ENCODE measurements at regions of chr10 and their contacts with region 1.

Region 1: GRCh38 chr10:114173921-114174694 is at the start of gene CCDC186:
- DNase-seq: peak; percentile 99
- ATAC-seq: peak; percentile 100
- H3K4me3 Mint-ChIP-seq: peak within 1 kb of the TSS; percentile 100
- H3K27ac Mint-ChIP-seq: peak within 1 kb of the TSS; percentile 99
- H3K4me1 Mint-ChIP-seq: peaks cover 32% of the 10 kb centered on the region
- H3K27me3 Mint-ChIP-seq: no peaks in the 10 kb centered on the region
- total RNA-seq, gene CCDC186: 9.1 to 13.9 TPM

Region 2: DNA sequence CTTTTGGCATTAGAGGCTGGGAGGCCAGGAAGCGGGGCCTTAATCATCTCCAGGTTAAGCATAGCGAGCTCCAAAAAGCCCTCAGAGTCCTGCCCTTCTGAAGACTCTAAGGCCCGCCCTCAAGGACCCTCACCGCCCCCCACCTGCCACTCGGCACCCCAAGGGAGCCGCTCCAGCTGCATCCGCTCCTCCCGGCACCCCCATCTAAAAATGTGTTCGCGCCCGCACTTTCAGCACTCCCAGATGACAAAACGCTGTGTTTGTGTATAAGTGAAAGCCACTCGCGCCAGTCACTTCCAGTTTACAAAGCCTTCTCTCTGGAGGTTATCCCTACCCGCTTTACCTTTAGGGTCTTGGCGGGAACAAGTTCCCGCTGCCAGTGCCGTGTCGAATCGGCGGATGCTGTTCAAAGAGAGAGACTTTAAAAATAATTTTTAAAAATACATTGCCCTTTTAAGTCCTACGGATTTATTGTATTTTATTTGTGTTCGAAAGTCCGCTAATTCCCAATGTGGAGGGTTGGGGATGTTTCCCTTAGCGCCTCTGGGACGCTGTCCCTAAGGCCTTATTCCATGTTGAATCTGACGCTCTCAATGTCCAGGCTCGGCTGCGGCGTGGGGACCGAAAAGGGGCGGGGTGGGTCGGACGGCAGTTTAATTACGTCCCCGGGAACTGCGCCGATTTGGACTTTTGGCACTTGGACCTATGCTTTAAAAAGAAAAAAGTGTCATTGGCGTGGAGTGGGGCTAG is 319.9 kb before region 1 on chr10 and contains the starts of genes DCLRE1A and NHLRC2:
- CTCF ChIA-PET with region 1: no interaction called
- POLR2A ChIA-PET with region 1: no interaction called
- intact Hi-C with region 1: loop called (anchors 2 to 5 kb)
- DNase-seq: peak; percentile 77
- ATAC-seq: peak; percentile 51
- H3K4me3 Mint-ChIP-seq: peak within 1 kb of the TSS; percentile 80
- H3K27ac Mint-ChIP-seq: peak within 1 kb of the TSS; percentile 97
- H3K4me1 Mint-ChIP-seq: peaks cover 39% of the 10 kb centered on the region
- H3K27me3 Mint-ChIP-seq: no peaks in the 10 kb centered on the region
- total RNA-seq, gene DCLRE1A: 12.5 to 14.4 TPM
- total RNA-seq, gene NHLRC2: 20.1 to 22.3 TPM

Region 3: GRCh38 chr10:114151892-114152291 is 22.2 kb before region 1 on chr10:
- CTCF ChIA-PET with region 1: no interaction called
- POLR2A ChIA-PET with region 1: no interaction called
- intact Hi-C with region 1: no loop called
- DNase-seq: no peak
- ATAC-seq: no peak
- H3K4me3 Mint-ChIP-seq: no peak overlapping the region
- H3K27ac Mint-ChIP-seq: no peak overlapping the region
- H3K4me1 Mint-ChIP-seq: no peaks in the 10 kb centered on the region
- H3K27me3 Mint-ChIP-seq: no peaks in the 10 kb centered on the region

Region 4: DNA sequence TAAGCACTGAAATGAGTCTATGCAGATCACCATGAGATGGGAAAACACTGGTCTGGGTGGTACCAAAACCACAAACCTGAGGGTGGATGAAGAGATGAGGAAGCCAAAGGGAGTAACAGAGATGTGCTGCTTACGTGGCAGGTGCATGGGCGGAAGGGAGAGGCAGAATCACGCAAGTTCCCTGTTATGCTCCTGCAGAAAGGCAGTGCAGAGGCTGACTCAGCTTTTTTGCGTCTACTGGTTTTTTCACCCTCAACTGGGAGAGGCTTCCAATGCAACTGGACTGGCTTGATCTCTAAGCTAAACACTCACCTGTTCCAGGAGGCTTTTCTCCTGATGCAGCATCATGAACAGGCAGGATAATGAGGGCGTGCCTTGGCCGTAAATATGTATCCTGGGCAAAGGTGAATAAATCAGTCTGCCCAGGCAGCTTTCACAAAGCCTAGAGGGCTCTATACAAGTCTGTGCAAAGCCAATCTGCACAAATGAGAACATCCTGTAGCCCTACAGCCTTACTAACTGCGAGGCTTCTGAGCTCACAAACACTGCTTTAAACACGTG is 325.6 kb after region 1 on chr10:
- CTCF ChIA-PET with region 1: no interaction called
- POLR2A ChIA-PET with region 1: no interaction called
- intact Hi-C with region 1: loop called in 1 of 2 experiments (anchors 5 kb)
- DNase-seq: peak; percentile 89
- ATAC-seq: peak; percentile 54
- H3K4me3 Mint-ChIP-seq: peak overlapping the region; percentile 61
- H3K27ac Mint-ChIP-seq: peak overlapping the region; percentile 99
- H3K4me1 Mint-ChIP-seq: peaks cover 92% of the 10 kb centered on the region
- H3K27me3 Mint-ChIP-seq: no peaks in the 10 kb centered on the region

Region 5: DNA sequence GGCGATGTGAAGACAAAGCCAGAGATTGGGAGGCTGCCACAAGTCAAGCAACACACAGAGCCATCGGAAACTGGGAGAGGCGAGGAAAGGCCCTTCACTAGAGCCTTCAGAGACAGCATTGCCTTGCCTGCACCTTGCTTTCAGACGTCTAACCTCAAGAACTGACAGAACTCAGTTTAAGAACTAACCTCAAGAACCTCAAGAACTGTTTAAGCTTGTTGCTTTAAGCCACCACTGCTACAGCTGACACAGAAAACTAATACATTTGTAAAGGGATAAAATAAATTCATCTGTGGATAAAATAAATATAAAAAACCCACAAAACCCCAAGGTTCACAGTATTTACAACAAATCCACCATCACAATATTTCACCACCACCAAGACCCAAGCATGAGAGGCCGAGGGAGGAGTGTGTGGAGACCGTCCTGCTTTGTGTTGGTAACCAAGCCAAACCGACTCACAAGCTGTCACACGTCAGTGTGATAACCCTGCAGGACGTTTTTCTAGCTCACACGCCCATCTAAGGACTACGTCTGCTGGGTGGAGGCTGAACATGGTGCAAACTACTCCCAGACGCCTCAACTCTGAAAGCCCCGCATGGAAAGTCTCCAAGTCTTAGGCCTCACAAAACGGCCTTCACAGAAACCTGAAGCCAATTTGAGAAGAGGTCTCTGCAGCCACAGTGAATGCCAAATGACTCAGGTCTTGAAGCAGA is 367.1 kb after region 1 on chr10:
- CTCF ChIA-PET with region 1: interaction called, 3 read pairs
- POLR2A ChIA-PET with region 1: interaction called, 3 read pairs
- intact Hi-C with region 1: loop called (anchors 2 to 5 kb)
- DNase-seq: peak; percentile 85
- ATAC-seq: peak; percentile 84
- H3K4me3 Mint-ChIP-seq: peak overlapping the region; percentile 55
- H3K27ac Mint-ChIP-seq: peak overlapping the region; percentile 99
- H3K4me1 Mint-ChIP-seq: peaks cover 90% of the 10 kb centered on the region
- H3K27me3 Mint-ChIP-seq: no peaks in the 10 kb centered on the region

Measured in activated CD4-positive, alpha-beta T cell treated with anti-CD3 and anti-CD28 coated beads for 36 hours (primary cell).